ENCODE measurements at regions of chr6 and their contacts with region 1.

Region 1: GRCh38 chr6:134063966-134064445 is 11.6 kb upstream of the SLC2A12 start:
- DNase-seq: no peak
- ATAC-seq: peak; percentile 90

Region 2: GRCh38 chr6:133923938-133924593 is 139.9 kb before region 1 on chr6:
- intact Hi-C with region 1: loop called (anchors 1 kb)
- DNase-seq: no peak
- ATAC-seq: peak; percentile 93

Region 3: DNA sequence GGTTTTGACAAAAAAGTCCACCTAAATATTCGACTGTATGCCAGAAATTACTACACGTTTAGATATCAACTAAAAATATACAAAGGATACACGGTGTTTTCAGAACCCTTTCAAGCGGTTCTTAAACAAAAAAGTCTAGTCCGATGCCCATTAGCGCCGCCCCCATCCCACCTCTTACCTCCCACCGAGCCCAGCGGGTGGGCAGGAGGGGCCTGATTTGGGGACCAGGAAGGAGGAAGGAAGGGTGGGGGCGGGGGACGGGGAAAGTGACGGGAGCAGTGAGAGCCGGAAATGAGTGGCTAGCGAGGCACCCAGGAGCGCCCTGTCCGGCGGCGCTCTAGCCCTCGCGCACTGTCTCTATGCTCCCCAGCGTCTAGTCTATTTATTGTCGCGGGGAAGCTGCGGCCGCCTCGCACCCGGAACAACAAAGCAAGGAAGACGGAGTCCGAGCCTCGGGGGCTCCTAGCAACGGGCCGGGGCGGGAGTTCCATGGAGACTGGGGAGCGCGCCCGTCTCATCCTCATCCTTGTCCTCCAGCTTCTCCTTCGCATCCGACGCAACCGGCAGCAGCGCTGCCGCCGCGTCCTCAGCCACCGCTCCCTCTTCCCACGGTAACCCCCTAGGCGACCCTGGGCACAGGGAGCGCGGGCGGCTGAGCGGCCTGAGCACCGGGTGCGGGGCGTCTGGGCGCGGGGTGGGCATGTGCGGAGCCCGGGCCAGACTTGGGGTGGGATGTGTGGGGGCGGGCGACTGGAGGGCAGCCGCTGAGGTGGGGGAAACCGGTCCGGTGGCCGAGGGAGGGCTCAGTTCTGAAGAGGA is 111.0 kb before region 1 on chr6 and contains the start of gene TBPL1:
- intact Hi-C with region 1: loop called (anchors 5 kb)
- DNase-seq: peak; percentile 96
- ATAC-seq: peak; percentile 98
- total RNA-seq, gene TBPL1: 14.5 TPM

Region 4: GRCh38 chr6:133973109-133973971 is 90.7 kb before region 1 on chr6:
- intact Hi-C with region 1: loop called (anchors 1 kb)
- DNase-seq: no peak
- ATAC-seq: no peak

Region 5: GRCh38 chr6:133991096-133991593 is 72.9 kb before region 1 on chr6:
- intact Hi-C with region 1: loop called (anchors 5 kb)
- DNase-seq: no peak
- ATAC-seq: peak; percentile 45

Region 6: GRCh38 chr6:134138226-134138975 is 74.4 kb after region 1 on chr6:
- intact Hi-C with region 1: no loop called
- DNase-seq: no peak
- ATAC-seq: no peak

Region 7: DNA sequence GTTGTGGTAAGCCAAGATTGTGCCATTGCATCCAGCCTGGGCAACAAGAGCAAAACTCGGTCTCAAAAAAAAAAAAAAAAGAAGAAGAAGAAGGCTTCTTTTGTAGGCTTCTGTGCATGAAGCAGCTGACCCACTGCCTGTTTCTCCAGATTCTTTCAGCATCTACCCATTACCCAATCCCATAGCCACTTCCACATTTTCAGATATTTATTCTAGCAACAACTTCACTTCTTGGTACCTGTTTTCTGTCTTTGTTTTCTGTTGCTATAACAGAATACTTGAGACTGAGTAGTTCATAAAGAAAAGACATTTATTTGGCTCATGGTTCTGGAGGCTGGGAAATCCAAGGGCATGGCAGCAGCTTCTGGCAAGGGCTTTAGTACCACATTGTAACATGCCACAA is 349.2 kb after region 1 on chr6:
- intact Hi-C with region 1: no loop called
- DNase-seq: no peak
- ATAC-seq: peak; percentile 44

Measured in Right ventricle myocardium inferior (tissue), 1 donor.